Esophagus muscularis mucosa (tissue), 4 donors: ENCODE measurements at regions of chr11 and their contacts with region 1.

Region 1: GRCh38 chr11:96197801-96198701 is 144.9 kb downstream of the MAML2 start:
- DNase-seq: no peak
- H3K4me3 ChIP-seq: no peak overlapping the region
- H3K27ac ChIP-seq: no peak overlapping the region
- H3K4me1 ChIP-seq: peaks cover 16 to 57% (median 47%) of the 10 kb centered on the region in 4 donors
- H3K27me3 ChIP-seq: no peaks in the 10 kb centered on the region
- CTCF ChIP-seq: no peak
- EP300 ChIP-seq: no peak
- POLR2A ChIP-seq: no peak

Region 2: DNA sequence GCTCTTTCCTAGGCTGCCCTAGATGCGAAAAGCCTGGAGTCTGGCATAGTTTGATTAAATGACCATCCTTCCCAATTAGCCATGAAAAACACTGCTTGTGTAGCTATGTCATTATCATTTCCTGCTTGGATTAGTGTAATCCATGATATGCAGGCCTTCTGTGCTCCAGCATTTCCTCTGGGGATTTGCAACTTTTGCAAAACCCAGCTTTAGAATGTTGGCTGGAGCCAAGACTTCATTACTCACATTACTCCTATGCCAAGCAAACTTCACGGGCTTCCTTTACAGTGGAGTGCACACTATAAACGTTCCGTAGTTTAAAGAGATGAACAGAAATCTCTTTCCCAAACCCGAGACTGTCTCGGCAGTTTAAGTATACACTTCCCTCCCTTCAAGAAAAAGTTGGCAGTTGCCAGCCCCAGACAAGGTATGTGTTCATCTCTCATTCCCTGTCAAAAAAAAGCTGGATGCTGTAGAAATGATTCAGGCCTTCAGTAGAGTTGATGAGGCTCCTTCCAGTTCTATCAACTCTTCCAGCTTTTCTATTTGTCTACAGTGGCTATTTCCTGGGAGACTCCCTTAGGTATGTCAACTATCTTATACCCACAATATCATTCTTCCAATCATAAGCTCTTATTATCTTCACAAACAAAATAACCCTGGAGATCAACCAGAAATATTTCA is 35.1 kb before region 1 on chr11:
- intact Hi-C with region 1: loop called (anchors 5 kb)
- DNase-seq: no peak
- H3K4me3 ChIP-seq: no peak overlapping the region
- H3K27ac ChIP-seq: peak overlapping the region; percentile 60 to 82 (median 64)
- H3K4me1 ChIP-seq: peaks cover 11 to 54% (median 48%) of the 10 kb centered on the region in 4 donors
- H3K27me3 ChIP-seq: no peaks in the 10 kb centered on the region
- CTCF ChIP-seq: no peak
- EP300 ChIP-seq: no peak
- POLR2A ChIP-seq: no peak